ENCODE measurements at regions of chr3 and their contacts with region 1.

Region 1: DNA sequence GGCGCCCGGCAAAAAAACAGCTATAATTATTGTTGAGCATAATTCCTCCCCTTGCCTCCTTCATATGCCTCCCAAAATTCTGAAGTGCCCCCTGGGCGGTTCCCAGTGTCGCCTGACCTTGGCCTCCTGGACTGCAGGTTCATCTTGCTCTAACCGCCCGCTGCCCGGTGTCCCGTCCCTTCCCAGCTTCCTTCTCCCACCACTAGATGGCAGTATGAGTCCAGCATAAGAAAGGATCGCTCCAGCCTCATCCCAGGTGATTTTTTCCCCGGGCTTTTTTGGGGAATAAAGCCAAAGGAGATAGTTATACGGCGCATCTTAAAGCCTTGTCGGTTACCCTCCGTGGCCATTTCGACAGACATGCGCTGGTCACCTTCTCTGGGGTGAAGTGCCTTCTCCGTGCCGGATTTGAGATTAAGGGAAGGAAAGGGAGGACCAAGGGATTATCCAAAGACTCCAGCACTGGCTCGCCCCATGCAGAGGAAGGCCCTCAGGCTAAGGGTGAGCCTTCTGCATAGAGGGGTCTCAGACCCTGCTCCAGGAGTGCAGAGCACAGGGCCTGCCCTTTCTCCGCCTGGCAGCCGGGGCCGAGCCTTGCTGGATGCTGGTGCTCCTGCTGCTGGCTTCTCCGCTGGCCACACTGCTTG is 45.8 kb upstream of the TRA2B start:
- DNase-seq: peak; percentile 36
- H3K4me3 ChIP-seq: no peak overlapping the region
- H3K27ac ChIP-seq: no peak overlapping the region
- H3K4me1 ChIP-seq: peaks cover 8% of the 10 kb centered on the region
- H3K27me3 ChIP-seq: peaks cover 15% of the 10 kb centered on the region
- CTCF ChIP-seq: peak; percentile 94

Region 2: GRCh38 chr3:186035277-186035676 is 51.7 kb after region 1 on chr3:
- intact Hi-C with region 1: no loop called
- DNase-seq: no peak
- H3K4me3 ChIP-seq: no peak overlapping the region
- H3K27ac ChIP-seq: no peak overlapping the region
- H3K4me1 ChIP-seq: no peaks in the 10 kb centered on the region
- H3K27me3 ChIP-seq: peaks cover 55% of the 10 kb centered on the region
- CTCF ChIP-seq: no peak

Region 3: GRCh38 chr3:186108941-186109865 is 125.6 kb after region 1 on chr3 and contains the start of gene ETV5:
- intact Hi-C with region 1: no loop called
- DNase-seq: peak; percentile 99
- H3K4me3 ChIP-seq: peak within 1 kb of the TSS; percentile 89
- H3K27ac ChIP-seq: peak within 1 kb of the TSS; percentile 88
- H3K4me1 ChIP-seq: peaks cover 34% of the 10 kb centered on the region
- H3K27me3 ChIP-seq: peaks cover 22% of the 10 kb centered on the region
- CTCF ChIP-seq: peak; percentile 37
- total RNA-seq, gene ETV5: 5.0 TPM

Region 4: DNA sequence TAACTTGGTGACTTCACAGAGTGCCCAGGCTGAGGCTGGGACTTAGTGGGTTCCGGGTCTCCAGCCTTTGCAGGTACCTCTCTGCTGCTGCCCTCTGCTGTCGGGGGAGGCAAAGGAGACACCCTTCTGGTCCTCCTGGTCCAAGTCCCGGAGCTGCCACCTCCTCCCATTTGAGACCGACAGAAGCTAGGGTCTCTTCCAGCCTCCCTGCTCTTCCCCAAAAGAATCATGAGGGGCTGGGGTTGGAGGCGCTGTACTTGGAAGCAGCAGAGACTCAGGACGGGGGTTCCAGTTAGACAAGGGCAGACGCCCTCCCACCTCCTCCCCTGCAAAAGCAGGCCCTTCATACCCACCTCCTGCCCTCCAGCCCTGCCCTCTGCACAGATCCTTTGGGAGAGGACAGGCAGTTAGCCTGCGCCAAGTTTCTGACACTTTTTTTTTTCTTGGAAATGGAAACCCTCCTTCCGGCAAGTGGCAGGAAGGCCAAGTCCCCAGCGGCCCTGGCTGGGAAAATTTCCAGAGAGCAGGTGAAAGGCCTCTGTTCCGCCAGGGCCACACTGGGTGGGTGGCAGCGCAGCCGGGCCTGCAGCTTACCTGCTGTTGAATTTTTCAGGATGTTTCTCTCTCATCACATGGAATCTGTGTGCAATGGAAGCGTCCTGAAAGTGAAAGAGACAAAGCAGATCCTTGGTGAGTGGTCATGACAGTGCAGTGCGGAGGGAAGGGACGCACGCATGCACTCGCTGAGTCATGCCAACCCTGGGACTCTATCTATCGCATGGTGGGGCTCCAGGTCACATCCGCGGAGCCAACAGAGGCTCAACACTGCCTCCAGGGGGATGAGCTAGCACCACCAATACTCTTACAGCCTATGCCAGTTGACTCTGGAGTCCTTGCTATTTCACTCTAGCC is 258.5 kb after region 1 on chr3:
- intact Hi-C with region 1: loop called (anchors 10 kb)
- DNase-seq: peak; percentile 74
- H3K4me3 ChIP-seq: peak overlapping the region; percentile 58
- H3K27ac ChIP-seq: peak overlapping the region; percentile 85
- H3K4me1 ChIP-seq: peaks cover 47% of the 10 kb centered on the region
- H3K27me3 ChIP-seq: no peaks in the 10 kb centered on the region
- CTCF ChIP-seq: peak; percentile 63

Region 5: DNA sequence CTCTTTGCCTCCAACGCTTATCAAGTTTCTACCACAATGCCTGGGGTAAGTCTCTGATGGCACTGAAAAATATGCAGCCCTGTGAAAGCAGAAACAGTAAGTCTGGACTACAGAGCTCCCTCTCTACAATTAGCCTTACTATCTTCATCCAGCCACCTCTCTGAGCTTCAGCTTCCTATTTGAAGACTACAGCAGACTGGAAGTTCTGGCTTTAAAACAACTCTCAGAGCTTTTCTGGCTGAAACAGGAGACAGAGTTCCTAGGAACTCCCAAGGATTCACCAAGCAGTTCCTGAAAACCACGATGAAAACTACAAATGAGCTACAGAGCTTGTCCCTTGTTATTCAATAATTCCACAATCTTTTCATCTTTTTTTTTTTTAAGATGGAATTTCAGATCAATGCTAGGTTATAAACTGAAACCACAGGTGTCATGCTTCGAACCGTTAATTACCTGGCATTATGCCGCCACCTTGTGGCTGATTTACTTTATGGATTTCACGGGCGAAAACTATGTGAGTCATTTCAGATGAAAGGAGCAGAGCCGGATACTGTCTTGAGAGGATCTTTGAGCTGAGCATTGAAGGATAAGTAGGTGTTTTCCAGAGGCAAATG is 556.7 kb after region 1 on chr3:
- intact Hi-C with region 1: loop called (anchors 5 kb)
- DNase-seq: peak; percentile 30
- H3K4me3 ChIP-seq: peak overlapping the region; percentile 40
- H3K27ac ChIP-seq: no peak overlapping the region
- H3K4me1 ChIP-seq: peaks cover 20% of the 10 kb centered on the region
- H3K27me3 ChIP-seq: no peaks in the 10 kb centered on the region
- CTCF ChIP-seq: peak; percentile 74